Ascending aorta (tissue), 2 donors: ENCODE measurements at regions of chr4 and their contacts with region 1.

Region 1: GRCh38 chr4:139229534-139230039 is 50.4 kb downstream of the MGARP start:
- DNase-seq: no peak
- H3K4me3 ChIP-seq: no peak overlapping the region
- H3K27ac ChIP-seq: no peak overlapping the region
- H3K4me1 ChIP-seq: no peaks in the 10 kb centered on the region
- H3K27me3 ChIP-seq: no peaks in the 10 kb centered on the region
- CTCF ChIP-seq: peak; percentile 54 to 80 (median 73)

Region 2: GRCh38 chr4:139030614-139031235 is 198.9 kb before region 1 on chr4:
- intact Hi-C with region 1: loop called (anchors 5 kb)
- DNase-seq: peak in 1 of 2 donors; percentile 82
- H3K4me3 ChIP-seq: no peak overlapping the region
- H3K27ac ChIP-seq: no peak overlapping the region
- H3K4me1 ChIP-seq: no peaks in the 10 kb centered on the region
- H3K27me3 ChIP-seq: no peaks in the 10 kb centered on the region
- CTCF ChIP-seq: peak; percentile 52 to 82 (median 75)

Region 3: DNA sequence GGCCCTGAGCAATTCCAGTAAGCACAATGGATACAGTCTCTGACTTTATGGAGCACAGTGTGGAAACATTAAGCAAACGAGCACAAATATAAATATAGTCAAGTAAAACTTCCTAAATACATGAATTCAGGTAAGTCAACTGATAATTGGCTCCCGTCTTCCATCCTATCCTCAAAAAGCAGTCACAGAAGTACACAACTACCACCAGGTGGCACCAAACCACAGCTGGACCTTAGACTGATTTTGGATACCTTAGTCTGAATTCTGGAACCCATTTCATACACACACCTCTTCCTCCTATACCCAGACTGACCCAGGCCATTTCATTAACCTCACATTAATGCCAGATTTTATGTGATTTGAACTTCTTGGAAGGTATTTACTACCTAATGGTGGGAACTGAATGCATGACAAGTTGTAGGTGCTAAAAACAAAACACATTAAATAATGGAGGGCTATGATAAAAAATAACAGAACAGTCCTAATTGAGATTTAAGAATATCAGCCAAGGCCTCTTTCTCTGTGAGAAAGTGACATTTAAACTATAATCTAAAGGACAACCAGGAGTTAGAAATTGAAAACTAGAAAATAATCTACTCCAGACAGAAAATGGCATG is 130.1 kb before region 1 on chr4:
- intact Hi-C with region 1: loop called (anchors 5 kb)
- DNase-seq: peak in 1 of 2 donors; percentile 74
- H3K4me3 ChIP-seq: no peak overlapping the region
- H3K27ac ChIP-seq: no peak overlapping the region
- H3K4me1 ChIP-seq: no peaks in the 10 kb centered on the region
- H3K27me3 ChIP-seq: no peaks in the 10 kb centered on the region
- CTCF ChIP-seq: peak; percentile 67 to 80 (median 74)

Region 4: GRCh38 chr4:139279760-139280620 is 50.4 kb after region 1 on chr4 and contains the start of gene MGARP:
- intact Hi-C with region 1: loop called (anchors 5 kb)
- DNase-seq: peak in 1 of 2 donors; percentile 68
- H3K4me3 ChIP-seq: peak within 1 kb of the TSS; percentile 69 to 78
- H3K27ac ChIP-seq: peak within 1 kb of the TSS; percentile 42 to 48
- H3K4me1 ChIP-seq: peaks cover 0 to 2% of the 10 kb centered on the region in 2 donors
- H3K27me3 ChIP-seq: no peaks in the 10 kb centered on the region
- CTCF ChIP-seq: no peak
- total RNA-seq, gene MGARP: 2.8 TPM

Region 5: DNA sequence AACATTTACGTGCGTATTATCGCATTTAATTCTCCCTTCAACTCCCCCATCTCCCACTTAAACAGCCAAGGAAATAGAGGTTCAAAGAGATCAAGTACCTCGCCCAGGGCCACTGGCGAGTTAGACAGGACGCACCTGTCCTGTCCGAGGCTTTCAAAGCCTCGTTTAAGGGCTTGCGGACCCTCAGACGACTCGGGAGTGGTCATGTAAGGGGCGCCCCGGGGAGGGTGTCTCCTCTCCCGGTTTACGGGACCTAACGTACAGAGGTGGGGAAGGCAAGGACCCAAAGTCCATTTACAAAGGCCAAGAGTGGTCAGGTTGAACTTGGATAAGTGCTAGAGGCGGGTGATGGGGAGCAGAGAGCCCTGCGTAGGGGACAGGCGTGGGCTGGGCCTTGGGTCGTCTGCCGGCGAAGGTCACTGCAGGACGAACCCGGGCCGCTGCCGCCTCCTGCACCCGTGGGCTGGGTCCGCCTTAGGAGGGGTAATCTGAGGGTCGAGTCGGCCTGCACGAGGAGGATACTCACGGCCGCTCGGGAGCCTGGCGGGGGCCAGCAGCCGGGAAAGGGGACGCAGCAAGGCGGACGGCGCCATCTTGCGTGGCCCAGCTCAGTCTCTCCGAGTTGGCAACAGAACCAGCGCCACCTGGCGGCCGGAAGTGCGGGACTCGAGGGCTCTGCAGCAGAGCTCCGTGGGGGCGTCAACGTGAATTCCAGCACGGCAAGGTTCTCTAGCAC is 65.8 kb after region 1 on chr4:
- intact Hi-C with region 1: loop called (anchors 1 kb)
- DNase-seq: peak; percentile 79 to 99
- H3K4me3 ChIP-seq: peak overlapping the region; percentile 85 to 87
- H3K27ac ChIP-seq: peak overlapping the region; percentile 76 to 78
- H3K4me1 ChIP-seq: peaks cover 0 to 27% of the 10 kb centered on the region in 2 donors
- H3K27me3 ChIP-seq: no peaks in the 10 kb centered on the region
- CTCF ChIP-seq: peak; percentile 93 to 95 (median 94)